ENCODE measurements at regions of chr9 and their contacts with region 1.

Region 1: DNA sequence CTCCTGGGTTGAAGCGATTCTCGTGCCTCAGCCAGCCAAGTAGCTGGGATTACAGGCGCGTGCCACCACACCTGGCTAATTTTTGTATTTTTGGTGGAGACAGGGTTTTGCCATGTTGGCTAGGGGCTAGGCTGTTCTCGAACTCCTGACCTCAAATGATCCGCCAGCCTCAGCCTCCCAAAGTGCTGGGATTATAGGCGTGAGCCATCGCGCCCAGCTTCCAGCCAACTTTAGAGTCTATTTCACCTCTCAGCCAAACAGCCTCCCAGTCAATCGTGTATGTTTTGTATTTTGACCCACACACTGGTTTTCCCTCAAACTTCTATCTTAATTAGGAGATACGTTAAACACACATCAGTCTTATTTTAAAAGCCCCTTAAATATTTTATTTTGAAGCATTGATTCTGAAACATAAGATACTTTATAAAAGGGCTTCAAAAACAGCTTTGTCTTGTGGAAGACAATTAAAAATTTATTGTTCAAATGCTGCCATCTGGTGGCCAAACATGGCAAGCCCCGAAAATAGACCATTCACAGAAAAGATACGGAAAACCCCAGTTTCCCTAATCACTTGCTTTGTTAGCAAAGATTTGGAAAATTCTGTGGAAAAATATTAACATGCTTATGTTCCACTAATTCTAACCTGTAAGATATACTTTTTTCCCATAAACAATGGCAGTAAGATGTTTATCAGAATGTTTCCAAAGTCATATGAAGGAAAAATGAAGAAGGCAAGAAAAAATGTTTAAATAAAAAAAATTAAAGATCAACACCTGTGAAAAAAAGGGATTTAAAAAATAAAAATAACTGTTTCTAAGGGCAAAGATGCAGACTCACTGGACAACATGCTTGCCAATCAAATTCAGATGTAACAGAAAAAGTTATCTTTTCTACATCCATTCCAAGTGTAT is 33.1 kb downstream of the APTX start:
- DNase-seq: peak in 1 of 2 donors; percentile 52
- H3K4me3 ChIP-seq: no peak overlapping the region
- H3K27ac ChIP-seq: no peak overlapping the region
- H3K4me1 ChIP-seq: no peaks in the 10 kb centered on the region
- H3K27me3 ChIP-seq: no peaks in the 10 kb centered on the region
- CTCF ChIP-seq: peak; percentile 65 to 81

Region 2: GRCh38 chr9:32579706-32580331 is 388.5 kb before region 1 on chr9:
- intact Hi-C with region 1: loop called (anchors 10 kb)
- DNase-seq: peak; percentile 67 to 70
- H3K4me3 ChIP-seq: peak overlapping the region in 1 of 2 donors; percentile 19
- H3K27ac ChIP-seq: no peak overlapping the region
- H3K4me1 ChIP-seq: peaks cover 0 to 6% (median 1%) of the 10 kb centered on the region in 4 donors
- H3K27me3 ChIP-seq: no peaks in the 10 kb centered on the region
- CTCF ChIP-seq: peak; percentile 81 to 85